ENCODE measurements at regions of chr20 and their contacts with region 1.

Region 1: DNA sequence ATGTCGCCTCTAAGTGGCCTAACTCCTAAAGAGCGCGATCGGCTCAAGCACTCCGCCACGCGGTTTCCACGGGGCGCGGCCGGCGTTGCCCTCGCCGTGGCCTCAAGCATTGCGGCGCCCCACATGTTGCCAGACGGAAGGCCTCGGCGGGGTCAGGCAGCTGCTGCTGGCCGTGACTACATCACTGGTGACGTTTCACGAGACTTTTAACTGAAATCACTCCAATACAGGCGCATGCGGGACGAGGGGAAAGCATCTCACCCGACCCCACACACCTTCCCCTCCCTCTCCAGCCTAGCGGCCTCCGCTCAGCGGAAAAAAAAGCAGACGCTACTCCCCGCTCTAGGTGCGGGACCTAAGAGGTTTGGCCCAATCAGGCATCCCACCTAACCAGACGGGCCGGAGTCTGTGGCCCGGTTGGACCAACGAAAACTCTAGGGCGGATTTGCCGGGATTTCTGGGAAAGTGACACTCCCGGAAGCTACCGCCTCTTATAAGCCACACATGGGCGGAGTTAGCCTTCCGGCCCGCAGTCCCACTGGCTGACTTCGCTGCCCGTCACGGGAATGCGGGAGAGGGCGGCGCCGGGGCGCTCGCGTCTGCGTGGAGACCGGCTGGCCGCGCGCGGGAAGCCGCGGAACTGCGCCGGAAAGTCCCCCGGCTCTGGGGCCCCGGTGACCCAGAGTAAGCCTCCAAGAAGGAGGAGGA is at the start of gene NXT1:
- DNase-seq: peak; percentile 99
- ATAC-seq: peak; percentile 89
- H3K4me3 ChIP-seq: peak within 1 kb of the TSS; percentile 72
- H3K27ac ChIP-seq: peak within 1 kb of the TSS; percentile 95
- H3K4me1 ChIP-seq: peaks cover 5% of the 10 kb centered on the region
- H3K27me3 ChIP-seq: no peaks in the 10 kb centered on the region
- CTCF ChIP-seq: no peak
- POLR2A ChIP-seq: peak; percentile 92
- RAD21 ChIP-seq: no peak
- total RNA-seq, gene NXT1: 25.5 and 25.8 TPM in 2 replicates

Region 2: DNA sequence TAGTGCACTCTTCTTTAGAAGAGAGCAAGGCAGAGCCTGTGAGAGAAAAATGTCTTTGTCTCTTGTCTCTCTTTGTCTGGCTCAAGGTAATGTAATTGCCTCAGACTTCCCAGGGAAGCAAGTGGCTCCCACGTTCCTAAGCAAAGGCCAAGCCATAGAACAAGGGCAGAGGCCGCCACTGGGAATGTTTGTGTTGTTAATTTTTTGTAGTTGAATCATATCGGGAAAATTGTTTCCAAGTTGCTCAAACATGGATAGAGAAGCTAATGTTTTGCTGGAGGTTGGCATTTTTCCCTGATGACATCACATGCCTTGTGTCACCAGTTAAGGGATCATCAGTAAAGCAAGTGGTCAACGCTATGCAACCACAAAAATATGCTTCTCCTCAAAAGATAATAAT is 554.5 kb before region 1 on chr20:
- CTCF ChIA-PET with region 1: no interaction called
- POLR2A ChIA-PET with region 1: no interaction called
- dilution Hi-C with region 1: no loop called
- in situ Hi-C with region 1: no loop called
- intact Hi-C with region 1: loop called (anchors 1 kb)
- DNase-seq: peak; percentile 99
- ATAC-seq: peak; percentile 92
- H3K4me3 ChIP-seq: no peak overlapping the region
- H3K27ac ChIP-seq: peak overlapping the region; percentile 88
- H3K4me1 ChIP-seq: peaks cover 10% of the 10 kb centered on the region
- H3K27me3 ChIP-seq: peaks cover 2% of the 10 kb centered on the region; the same call in 1 of the 2 replicates
- CTCF ChIP-seq: no peak
- POLR2A ChIP-seq: no peak
- RAD21 ChIP-seq: peak; percentile 6; the same call in 1 of the 2 replicates

Region 3: GRCh38 chr20:23147964-23148730 is 202.2 kb before region 1 on chr20:
- CTCF ChIA-PET with region 1: no interaction called
- POLR2A ChIA-PET with region 1: interaction called, 3 read pairs
- dilution Hi-C with region 1: no loop called
- in situ Hi-C with region 1: no loop called
- intact Hi-C with region 1: loop called (anchors 10 kb)
- DNase-seq: peak; percentile 90
- ATAC-seq: peak; percentile 58
- H3K4me3 ChIP-seq: no peak overlapping the region
- H3K27ac ChIP-seq: peak overlapping the region; percentile 12
- H3K4me1 ChIP-seq: peaks cover 36% of the 10 kb centered on the region
- H3K27me3 ChIP-seq: no peaks in the 10 kb centered on the region
- CTCF ChIP-seq: no peak
- POLR2A ChIP-seq: no peak; the same call in 1 of the 2 replicates
- RAD21 ChIP-seq: no peak

Region 4: DNA sequence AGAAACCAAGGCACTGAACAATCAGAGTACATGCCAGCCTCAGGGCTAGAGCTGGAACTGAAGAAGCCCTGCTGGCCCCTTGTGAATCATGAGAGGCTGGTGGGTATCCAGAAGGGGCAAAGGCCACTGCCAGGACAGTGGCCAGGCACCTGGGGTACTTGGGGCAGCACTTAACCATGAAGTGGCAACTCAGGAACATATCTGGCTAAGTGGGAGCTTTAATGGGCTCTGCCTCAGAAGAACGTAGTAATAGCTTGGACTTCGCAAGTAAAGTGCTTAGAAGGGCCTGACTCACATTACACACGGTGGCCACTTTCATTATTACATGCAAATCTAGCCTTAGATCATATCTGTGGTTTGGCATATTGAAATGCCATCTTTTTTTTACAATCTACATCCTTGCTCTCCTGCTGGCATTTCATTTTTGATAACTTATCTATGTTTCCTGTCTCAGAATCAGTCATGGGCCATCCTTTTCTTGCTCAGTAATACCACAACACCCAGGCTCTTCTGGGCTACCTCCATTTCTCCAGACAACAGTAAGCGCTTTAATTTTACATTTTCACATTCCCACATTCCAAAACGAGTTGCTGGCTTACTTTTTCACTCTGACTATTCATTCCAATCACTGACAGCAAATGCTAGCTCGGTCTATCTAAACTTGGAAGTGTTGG is 49.4 kb after region 1 on chr20:
- CTCF ChIA-PET with region 1: no interaction called
- POLR2A ChIA-PET with region 1: no interaction called
- dilution Hi-C with region 1: no loop called
- in situ Hi-C with region 1: no loop called
- intact Hi-C with region 1: no loop called
- DNase-seq: peak; percentile 58
- ATAC-seq: peak; percentile 15; the same call in 1 of the 2 replicates
- H3K4me3 ChIP-seq: no peak overlapping the region
- H3K27ac ChIP-seq: no peak overlapping the region
- H3K4me1 ChIP-seq: peaks cover 13% of the 10 kb centered on the region
- H3K27me3 ChIP-seq: no peaks in the 10 kb centered on the region
- CTCF ChIP-seq: no peak
- POLR2A ChIP-seq: no peak
- RAD21 ChIP-seq: no peak

Region 5: DNA sequence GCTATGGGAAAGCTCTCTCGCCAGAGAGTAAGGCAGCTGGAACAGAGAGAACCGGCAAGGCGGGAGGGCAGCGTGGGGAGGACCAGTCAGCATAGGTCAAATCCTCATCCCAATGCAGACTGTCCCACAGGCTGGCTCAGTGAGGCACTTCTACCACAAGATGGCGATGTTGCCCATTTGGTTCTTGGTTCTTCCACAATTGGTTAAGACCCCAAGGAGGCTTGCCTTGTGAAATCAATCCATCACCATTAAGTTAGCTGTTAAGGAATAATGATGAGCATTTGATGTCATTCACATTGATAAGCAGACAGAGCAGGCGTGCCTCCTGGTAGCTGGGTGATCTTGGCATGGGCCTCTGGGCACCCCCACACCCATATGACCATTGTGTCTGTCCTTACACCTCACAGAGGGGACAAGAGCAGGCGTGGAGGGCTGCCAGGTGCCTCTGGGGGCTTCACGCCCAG is 91.5 kb after region 1 on chr20:
- CTCF ChIA-PET with region 1: no interaction called
- POLR2A ChIA-PET with region 1: no interaction called
- dilution Hi-C with region 1: no loop called
- in situ Hi-C with region 1: no loop called
- intact Hi-C with region 1: loop called (anchors 1 kb)
- DNase-seq: peak; percentile 72
- ATAC-seq: peak; percentile 85
- H3K4me3 ChIP-seq: no peak overlapping the region
- H3K27ac ChIP-seq: no peak overlapping the region
- H3K4me1 ChIP-seq: 0 out of 2 replicates have a peak, but pooled peaks cover 3% of the 10 kb centered on the region
- H3K27me3 ChIP-seq: peaks cover 3% of the 10 kb centered on the region; the same call in 1 of the 2 replicates
- CTCF ChIP-seq: peak; percentile 85
- POLR2A ChIP-seq: no peak
- RAD21 ChIP-seq: peak; percentile 78

Region 6: GRCh38 chr20:23513164-23513563 is 162.8 kb after region 1 on chr20:
- CTCF ChIA-PET with region 1: no interaction called
- POLR2A ChIA-PET with region 1: no interaction called
- dilution Hi-C with region 1: no loop called
- in situ Hi-C with region 1: no loop called
- intact Hi-C with region 1: no loop called
- DNase-seq: no peak
- ATAC-seq: no peak
- H3K4me3 ChIP-seq: no peak overlapping the region
- H3K27ac ChIP-seq: no peak overlapping the region
- H3K4me1 ChIP-seq: no peaks in the 10 kb centered on the region
- H3K27me3 ChIP-seq: no peaks in the 10 kb centered on the region; the same call in 1 of the 2 replicates
- CTCF ChIP-seq: no peak
- POLR2A ChIP-seq: no peak
- RAD21 ChIP-seq: no peak